ENCODE measurements at regions of chr17 and their contacts with region 1.

Region 1: DNA sequence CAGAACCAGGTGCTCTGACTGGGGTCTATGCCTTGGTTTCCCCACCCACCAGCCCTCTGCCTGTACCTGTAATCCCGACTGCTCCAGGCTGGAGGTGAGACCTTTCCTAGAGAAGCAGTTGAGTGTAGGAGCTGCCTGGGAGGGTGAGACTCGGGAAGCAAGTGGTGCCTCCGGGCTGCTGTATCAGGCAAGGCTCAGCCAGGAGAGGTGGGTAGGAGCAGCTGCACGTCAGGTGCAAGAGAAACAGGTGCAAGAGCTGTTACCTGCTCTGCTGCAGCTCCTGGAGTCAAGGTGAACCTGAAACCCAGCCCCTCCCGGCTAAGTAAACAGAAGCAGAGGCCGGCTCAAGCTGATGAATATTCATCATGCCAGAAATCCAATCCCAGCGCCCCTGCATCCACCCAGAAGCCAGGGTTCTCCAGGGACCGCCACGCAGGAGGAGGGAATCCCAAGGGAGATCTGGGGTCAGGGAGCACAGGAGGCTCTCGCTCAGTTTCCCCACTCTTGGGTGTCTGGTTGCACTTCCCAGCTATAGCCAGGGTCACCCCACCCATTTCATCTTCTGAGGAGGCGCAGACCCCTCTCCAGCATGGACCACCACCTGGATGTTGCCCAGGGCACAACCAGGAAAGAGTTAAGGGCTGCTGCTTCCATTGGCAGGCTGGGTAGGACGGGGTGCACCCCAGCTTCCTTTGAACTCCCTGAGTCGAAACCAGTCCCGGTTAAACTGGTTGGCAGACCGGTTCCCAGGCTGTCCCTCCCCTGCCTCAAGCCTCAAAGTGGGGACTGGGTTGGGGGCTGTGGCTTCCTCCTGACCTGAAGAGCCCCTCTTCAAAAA is at the start of gene PRR15L:
- DNase-seq: no peak
- ATAC-seq: no peak
- H3K4me3 ChIP-seq: no peak within 1 kb of the TSS
- H3K27ac ChIP-seq: no peak within 1 kb of the TSS
- H3K4me1 ChIP-seq: peaks cover 16% of the 10 kb centered on the region
- H3K27me3 ChIP-seq: no peaks in the 10 kb centered on the region
- CTCF ChIP-seq: no peak
- total RNA-seq, gene PRR15L: 0.18 TPM

Region 2: GRCh38 chr17:47884905-47885733 is 72.7 kb before region 1 on chr17:
- CTCF ChIA-PET with region 1: no interaction called
- POLR2A ChIA-PET with region 1: no interaction called
- in situ Hi-C with region 1: no loop called
- intact Hi-C with region 1: no loop called
- DNase-seq: no peak
- ATAC-seq: no peak
- H3K4me3 ChIP-seq: no peak overlapping the region
- H3K27ac ChIP-seq: no peak overlapping the region
- H3K4me1 ChIP-seq: peaks cover 12% of the 10 kb centered on the region; the same call in 1 of the 2 replicates
- H3K27me3 ChIP-seq: no peaks in the 10 kb centered on the region
- CTCF ChIP-seq: no peak

Region 3: DNA sequence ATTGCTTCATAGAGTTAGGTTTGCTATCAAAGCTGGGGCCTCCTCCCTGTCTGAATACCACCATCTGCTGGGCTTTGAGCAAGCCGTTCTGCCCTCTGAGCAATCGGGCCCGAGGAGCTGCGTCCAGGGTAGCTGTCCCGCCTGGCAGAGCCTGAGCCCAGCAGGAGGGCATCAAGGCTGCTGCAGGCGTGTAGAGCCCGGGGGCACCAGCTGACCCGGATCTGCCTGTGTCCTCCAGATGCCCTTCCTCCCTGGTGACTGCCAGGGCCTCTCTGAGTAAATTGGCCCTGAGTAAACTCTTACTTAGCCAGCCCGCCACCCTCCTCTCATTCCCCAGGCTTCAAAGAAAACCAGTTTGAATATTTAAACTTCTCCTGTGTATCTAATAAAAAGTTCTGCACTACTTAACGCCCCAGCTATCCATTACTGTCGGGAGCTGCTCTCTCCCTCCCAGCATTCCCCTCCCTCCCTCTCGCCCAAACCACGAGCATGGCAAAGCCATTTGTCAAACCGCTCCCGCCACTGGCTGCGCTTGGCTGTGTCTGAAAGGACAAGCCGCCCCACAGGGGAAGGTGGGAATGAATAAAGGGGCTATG is 29.5 kb after region 1 on chr17:
- CTCF ChIA-PET with region 1: no interaction called
- POLR2A ChIA-PET with region 1: no interaction called
- in situ Hi-C with region 1: no loop called
- intact Hi-C with region 1: no loop called
- DNase-seq: no peak
- ATAC-seq: peak; percentile 63
- H3K4me3 ChIP-seq: no peak overlapping the region
- H3K27ac ChIP-seq: peak overlapping the region; percentile 57; the same call in 1 of the 2 replicates
- H3K4me1 ChIP-seq: peaks cover 12% of the 10 kb centered on the region
- H3K27me3 ChIP-seq: no peaks in the 10 kb centered on the region
- CTCF ChIP-seq: no peak

Region 4: DNA sequence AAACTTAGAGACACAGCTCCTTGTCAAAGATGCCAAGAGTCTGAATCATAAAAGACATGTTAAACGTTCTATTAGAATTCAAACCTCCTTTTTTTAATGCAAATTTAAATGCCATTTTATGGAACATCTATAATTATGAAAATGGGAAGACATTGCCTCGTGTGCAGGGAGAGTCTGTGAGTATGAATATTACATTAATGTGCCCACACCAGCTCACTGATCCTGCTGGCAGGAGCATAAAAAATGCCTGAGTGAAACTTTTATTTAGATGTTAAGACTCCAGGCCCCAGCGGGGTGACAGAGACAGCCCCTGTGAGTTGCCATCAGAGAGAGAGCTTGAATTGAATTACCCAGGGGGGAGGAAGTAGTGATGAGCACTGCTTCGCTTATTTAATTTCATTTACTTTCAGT is 234.5 kb after region 1 on chr17:
- CTCF ChIA-PET with region 1: no interaction called
- POLR2A ChIA-PET with region 1: no interaction called
- in situ Hi-C with region 1: no loop called
- intact Hi-C with region 1: no loop called
- DNase-seq: no peak
- ATAC-seq: no peak
- H3K4me3 ChIP-seq: no peak overlapping the region
- H3K27ac ChIP-seq: no peak overlapping the region
- H3K4me1 ChIP-seq: peaks cover 12% of the 10 kb centered on the region; the same call in 1 of the 2 replicates
- H3K27me3 ChIP-seq: no peaks in the 10 kb centered on the region
- CTCF ChIP-seq: no peak

Region 5: GRCh38 chr17:48799069-48799723 is 841.4 kb after region 1 on chr17:
- CTCF ChIA-PET with region 1: interaction called, 10 read pairs
- POLR2A ChIA-PET with region 1: no interaction called
- in situ Hi-C with region 1: no loop called
- intact Hi-C with region 1: no loop called
- DNase-seq: no peak
- ATAC-seq: no peak
- H3K4me3 ChIP-seq: no peak overlapping the region
- H3K27ac ChIP-seq: no peak overlapping the region
- H3K4me1 ChIP-seq: peaks cover 7% of the 10 kb centered on the region
- H3K27me3 ChIP-seq: no peaks in the 10 kb centered on the region; the same call in 1 of the 2 replicates
- CTCF ChIP-seq: no peak